ENCODE measurements at regions of chr9 and their contacts with region 1.

Region 1: DNA sequence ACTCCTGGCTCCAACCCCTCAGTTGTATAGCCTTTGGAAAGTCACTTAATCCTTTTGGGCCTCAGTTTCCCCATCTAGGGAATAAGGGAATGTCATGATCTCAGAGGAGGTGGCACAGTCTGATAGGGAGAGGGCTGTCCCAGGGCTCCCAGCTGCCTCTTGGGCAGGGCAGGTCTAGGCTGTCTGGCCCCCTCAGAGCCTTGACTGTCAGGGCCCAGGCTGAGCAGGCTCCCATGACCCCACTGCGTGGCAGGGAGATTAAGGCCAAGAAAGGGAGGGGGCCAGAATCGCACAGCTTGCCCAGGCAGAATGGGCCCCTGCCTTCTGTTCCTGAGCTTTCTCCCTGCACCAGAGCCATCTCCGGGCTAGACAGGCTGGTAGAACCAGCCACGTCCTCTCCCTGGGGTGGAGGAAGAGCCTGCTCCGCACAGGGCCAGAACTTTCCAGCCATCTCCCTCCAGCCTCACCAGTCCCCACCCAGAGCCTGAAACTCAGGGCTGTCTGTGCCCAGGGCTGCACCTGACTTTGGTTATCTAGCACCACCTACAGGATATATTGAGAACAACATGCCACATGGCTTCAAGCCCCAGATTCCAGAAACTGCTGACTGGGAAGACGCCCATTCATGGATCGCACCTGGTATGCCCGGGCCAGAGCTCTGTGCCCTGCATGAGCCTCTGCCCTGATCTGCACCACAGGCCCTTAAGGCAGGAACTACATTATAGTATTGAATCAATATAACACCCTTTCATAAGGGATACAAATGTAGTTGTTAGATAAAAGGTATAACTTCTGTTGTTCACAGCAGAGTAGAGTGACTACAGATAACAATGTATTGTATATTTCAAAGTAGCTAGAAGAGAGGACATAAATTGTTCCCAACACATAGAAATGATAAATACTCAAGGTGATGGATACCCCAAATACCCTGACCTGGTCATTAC is 32.0 kb downstream of the NAIF1 start:
- DNase-seq: peak; percentile 96
- H3K27ac ChIP-seq: peak overlapping the region; percentile 8; the same call in 1 of the 2 replicates
- CTCF ChIP-seq: peak; percentile 98

Region 2: GRCh38 chr9:127935765-127936221 is 99.3 kb before region 1 on chr9:
- CTCF ChIA-PET with region 1: interaction called, 6 read pairs
- POLR2A ChIA-PET with region 1: interaction called, 12 read pairs
- DNase-seq: no peak
- H3K27ac ChIP-seq: peak overlapping the region; percentile 75
- CTCF ChIP-seq: no peak

Region 3: GRCh38 chr9:127955294-127956035 is 79.6 kb before region 1 on chr9:
- CTCF ChIA-PET with region 1: interaction called, 43 read pairs
- POLR2A ChIA-PET with region 1: no interaction called
- DNase-seq: peak; percentile 94
- H3K27ac ChIP-seq: peak overlapping the region; percentile 88
- CTCF ChIP-seq: no peak; the same call in 1 of the 2 replicates

Region 4: GRCh38 chr9:128045831-128046230 is 10.7 kb after region 1 on chr9:
- CTCF ChIA-PET with region 1: interaction called, 17 read pairs
- POLR2A ChIA-PET with region 1: no interaction called
- DNase-seq: no peak
- H3K27ac ChIP-seq: no peak overlapping the region
- CTCF ChIP-seq: no peak

Region 5: GRCh38 chr9:128764361-128764760 is 729.3 kb after region 1 on chr9:
- CTCF ChIA-PET with region 1: no interaction called
- POLR2A ChIA-PET with region 1: no interaction called
- DNase-seq: no peak
- H3K27ac ChIP-seq: no peak overlapping the region; the same call in 1 of the 2 replicates
- CTCF ChIP-seq: no peak